ENCODE measurements at regions of chr2 and their contacts with region 1.

Region 1: DNA sequence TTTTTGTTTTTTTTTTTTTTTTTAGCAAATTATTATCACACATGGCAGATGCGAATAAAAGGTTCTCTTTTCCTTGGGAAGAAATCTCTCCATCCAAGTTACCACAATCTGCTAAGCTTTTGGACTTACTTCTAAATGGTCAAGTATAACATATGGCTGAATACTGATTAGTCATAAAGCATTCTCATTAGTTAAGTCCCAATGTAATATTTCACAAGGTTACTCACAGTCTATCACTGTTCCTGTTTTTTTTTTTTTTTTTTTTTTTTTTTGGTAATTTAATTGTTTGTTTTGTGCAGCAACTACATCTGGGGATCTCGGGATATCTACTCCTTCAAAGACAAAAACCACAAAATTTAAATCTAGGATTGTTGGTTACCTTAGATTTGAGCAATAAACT is 771.7 kb downstream of the CPS1 start:
- DNase-seq: no peak
- ATAC-seq: no peak
- H3K4me3 ChIP-seq: no peak overlapping the region
- H3K4me3 Mint-ChIP-seq: no peak overlapping the region
- H3K27ac ChIP-seq: no peak overlapping the region
- H3K27ac Mint-ChIP-seq: no peak overlapping the region
- H3K4me1 ChIP-seq: no peaks in the 10 kb centered on the region
- H3K4me1 Mint-ChIP-seq: no peaks in the 10 kb centered on the region
- H3K27me3 ChIP-seq: no peaks in the 10 kb centered on the region
- H3K27me3 Mint-ChIP-seq: no peaks in the 10 kb centered on the region

Region 2: GRCh38 chr2:209806318-209806717 is 1521.8 kb before region 1 on chr2:
- CTCF ChIA-PET with region 1: no interaction called
- POLR2A ChIA-PET with region 1: interaction called in 1 of 2 experiments, 10 read pairs
- DNase-seq: no peak
- ATAC-seq: no peak
- H3K4me3 ChIP-seq: no peak overlapping the region
- H3K4me3 Mint-ChIP-seq: no peak overlapping the region
- H3K27ac ChIP-seq: no peak overlapping the region
- H3K27ac Mint-ChIP-seq: no peak overlapping the region
- H3K4me1 ChIP-seq: no peaks in the 10 kb centered on the region
- H3K4me1 Mint-ChIP-seq: no peaks in the 10 kb centered on the region
- H3K27me3 ChIP-seq: no peaks in the 10 kb centered on the region
- H3K27me3 Mint-ChIP-seq: peaks cover 3 to 4% of the 10 kb centered on the region in 2 donors

Region 3: DNA sequence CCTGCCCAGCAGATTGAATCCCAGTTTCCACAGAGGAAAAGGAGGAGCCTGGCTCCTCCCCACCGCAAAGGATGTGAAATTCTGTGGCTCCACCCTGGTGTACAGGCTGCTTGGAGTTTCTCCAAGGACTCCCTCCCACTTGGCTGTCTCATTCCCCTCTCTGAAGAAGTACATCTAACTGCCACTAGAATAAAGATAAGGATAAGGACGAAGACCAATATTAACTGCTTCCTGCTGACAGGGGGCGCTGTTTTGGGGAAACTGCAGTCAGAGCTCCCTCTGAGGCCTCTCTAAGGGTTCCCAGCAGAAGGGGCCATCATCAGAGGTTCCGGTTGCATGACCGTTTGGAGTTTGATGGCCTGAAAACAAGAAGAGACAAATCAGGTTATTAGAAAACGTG is 19.2 kb after region 1 on chr2:
- CTCF ChIA-PET with region 1: no interaction called
- POLR2A ChIA-PET with region 1: no interaction called
- DNase-seq: no peak
- ATAC-seq: no peak
- H3K4me3 ChIP-seq: no peak overlapping the region
- H3K4me3 Mint-ChIP-seq: no peak overlapping the region
- H3K27ac ChIP-seq: no peak overlapping the region
- H3K27ac Mint-ChIP-seq: no peak overlapping the region
- H3K4me1 ChIP-seq: no peaks in the 10 kb centered on the region
- H3K4me1 Mint-ChIP-seq: no peaks in the 10 kb centered on the region
- H3K27me3 ChIP-seq: no peaks in the 10 kb centered on the region
- H3K27me3 Mint-ChIP-seq: no peaks in the 10 kb centered on the region

Measured in T-cell (primary cell).